ENCODE measurements at regions of chr16 and their contacts with region 1.

Region 1: DNA sequence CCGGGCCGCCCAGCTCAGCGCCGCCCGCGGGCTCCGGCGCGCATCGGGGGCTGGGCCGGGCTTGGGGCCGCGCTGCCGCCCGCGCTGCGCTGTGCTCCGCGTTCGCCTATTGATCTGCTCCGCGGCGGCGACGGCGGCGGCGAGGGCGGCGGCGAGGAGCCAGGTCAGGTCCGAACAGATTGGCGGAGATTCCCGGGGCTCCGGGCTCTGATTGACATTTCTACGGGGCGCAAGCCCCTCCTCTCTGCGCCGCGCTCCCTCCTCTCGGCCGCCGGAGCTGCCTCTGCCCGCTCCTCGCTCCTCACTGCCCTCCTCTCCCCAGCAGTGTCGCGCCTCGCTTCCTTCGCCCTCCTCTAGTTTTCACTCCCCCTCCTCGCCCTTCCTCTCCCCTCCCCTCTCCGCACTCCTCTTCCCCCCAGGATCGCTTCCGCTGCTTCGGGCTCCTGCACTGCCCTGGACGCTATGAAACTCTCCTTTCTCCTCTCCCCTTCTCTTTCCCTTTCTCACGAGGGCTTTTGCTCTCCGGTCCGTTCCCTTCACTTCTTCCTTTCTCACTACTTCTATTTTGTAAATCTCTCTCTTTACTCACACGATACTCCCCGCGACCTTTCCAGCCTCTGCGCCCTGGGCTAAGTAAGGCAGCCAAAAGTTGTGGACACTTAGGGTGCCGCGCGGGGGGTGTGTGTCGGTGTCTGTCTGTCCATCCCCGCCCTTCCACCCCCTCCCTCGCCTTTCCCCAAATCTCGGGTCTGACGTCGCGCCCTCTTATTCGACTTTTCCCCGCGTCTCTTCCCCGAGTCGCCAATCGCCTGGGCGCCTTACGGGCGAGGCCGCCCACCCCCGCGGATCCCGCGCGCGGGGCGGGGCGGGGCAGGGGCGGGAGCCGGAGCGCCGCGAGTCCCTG is at the start of gene IRX3:
- DNase-seq: peak; percentile 72 to 93
- ATAC-seq: peak; percentile 85
- H3K4me3 ChIP-seq: peak within 1 kb of the TSS; percentile 42 to 50
- H3K27ac ChIP-seq: no peak within 1 kb of the TSS
- H3K4me1 ChIP-seq: no peaks in the 10 kb centered on the region
- H3K27me3 ChIP-seq: no peaks in the 10 kb centered on the region
- total RNA-seq, gene IRX3: 1.4 to 6.7 TPM

Region 2: GRCh38 chr16:53773150-53773846 is 513.0 kb before region 1 on chr16:
- intact Hi-C with region 1: loop called in 1 of 2 experiments (anchors 10 kb)
- DNase-seq: no peak
- ATAC-seq: peak; percentile 68
- H3K4me3 ChIP-seq: no peak overlapping the region
- H3K27ac ChIP-seq: no peak overlapping the region
- H3K4me1 ChIP-seq: peaks cover 5 to 20% of the 10 kb centered on the region in 2 donors
- H3K27me3 ChIP-seq: no peaks in the 10 kb centered on the region

Region 3: DNA sequence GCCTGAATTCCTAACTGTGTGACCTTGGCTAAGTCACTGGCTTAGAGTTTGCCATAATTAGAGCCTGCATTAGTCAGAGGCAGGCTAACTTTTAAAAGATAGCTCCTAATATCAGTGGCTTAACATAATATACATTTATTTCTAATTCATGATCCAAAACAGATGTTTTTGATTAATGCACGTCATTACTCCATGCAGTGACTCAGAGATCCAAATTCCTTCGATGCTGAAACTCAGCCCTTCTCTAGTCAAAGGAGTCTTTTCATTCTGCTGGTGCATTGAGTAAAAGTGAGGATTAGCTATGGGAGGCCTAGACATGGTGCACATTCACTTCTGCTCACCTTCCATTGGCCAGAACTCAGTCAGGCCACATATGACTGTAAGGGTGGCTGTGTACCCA is 49.6 kb before region 1 on chr16:
- intact Hi-C with region 1: no loop called
- DNase-seq: no peak
- ATAC-seq: no peak
- H3K4me3 ChIP-seq: no peak overlapping the region
- H3K27ac ChIP-seq: no peak overlapping the region
- H3K4me1 ChIP-seq: peaks cover 0 to 2% of the 10 kb centered on the region in 2 donors
- H3K27me3 ChIP-seq: no peaks in the 10 kb centered on the region

Region 4: DNA sequence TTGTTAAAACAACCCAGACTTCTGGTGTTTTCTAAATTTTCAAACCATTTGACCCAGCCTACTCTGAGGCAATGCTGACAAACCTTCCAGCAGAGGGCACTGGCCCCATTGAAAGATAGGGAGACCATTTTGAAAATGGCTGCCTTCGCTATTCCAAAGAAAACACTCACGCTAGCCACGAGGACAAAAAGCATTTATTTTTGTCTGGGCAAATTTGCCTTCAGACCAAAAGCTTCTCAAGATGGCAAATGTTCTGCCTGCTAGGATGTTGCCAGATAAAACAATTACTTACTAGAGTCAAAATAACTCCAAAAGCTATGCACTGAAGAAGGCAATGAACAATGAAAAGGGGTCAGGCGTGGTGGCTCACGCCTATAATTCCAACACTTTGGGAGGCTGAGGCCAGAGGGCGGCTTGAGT is 347.6 kb after region 1 on chr16:
- intact Hi-C with region 1: loop called (anchors 10 kb)
- DNase-seq: peak; percentile 68 to 79
- ATAC-seq: peak; percentile 85
- H3K4me3 ChIP-seq: no peak overlapping the region
- H3K27ac ChIP-seq: peak overlapping the region in 1 of 2 donors; percentile 17
- H3K4me1 ChIP-seq: peaks cover 0 to 3% of the 10 kb centered on the region in 2 donors
- H3K27me3 ChIP-seq: no peaks in the 10 kb centered on the region

Region 5: GRCh38 chr16:55257966-55258613 is 971.7 kb after region 1 on chr16:
- intact Hi-C with region 1: loop called in 1 of 2 experiments (anchors 5 kb)
- DNase-seq: peak; percentile 66 to 85
- ATAC-seq: peak; percentile 73
- H3K4me3 ChIP-seq: no peak overlapping the region
- H3K27ac ChIP-seq: no peak overlapping the region
- H3K4me1 ChIP-seq: no peaks in the 10 kb centered on the region
- H3K27me3 ChIP-seq: no peaks in the 10 kb centered on the region